Head of caudate nucleus (tissue), 42 donors: ENCODE measurements at regions of chr1 and their contacts with region 1.

Region 1: GRCh38 chr1:202184750-202185460 is 8.7 kb upstream of the LGR6 start:
- DNase-seq: peak; percentile 67 to 95 (median 87)

Region 2: GRCh38 chr1:202311875-202312635 is 127.2 kb after region 1 on chr1:
- intact Hi-C with region 1: loop called (anchors 5 kb)
- DNase-seq: no peak

Region 3: GRCh38 chr1:202348509-202349205 is 163.8 kb after region 1 on chr1 and contains the start of gene PPP1R12B:
- intact Hi-C with region 1: no loop called
- DNase-seq: peak; percentile 96 to 100 (median 99)

Region 4: GRCh38 chr1:202728951-202729350 is 544.0 kb after region 1 on chr1:
- intact Hi-C with region 1: loop called (anchors 10 kb)
- DNase-seq: no peak